CD4-positive, alpha-beta T cell (primary cell): ENCODE measurements at regions of chr13 and their contacts with region 1.

Region 1: DNA sequence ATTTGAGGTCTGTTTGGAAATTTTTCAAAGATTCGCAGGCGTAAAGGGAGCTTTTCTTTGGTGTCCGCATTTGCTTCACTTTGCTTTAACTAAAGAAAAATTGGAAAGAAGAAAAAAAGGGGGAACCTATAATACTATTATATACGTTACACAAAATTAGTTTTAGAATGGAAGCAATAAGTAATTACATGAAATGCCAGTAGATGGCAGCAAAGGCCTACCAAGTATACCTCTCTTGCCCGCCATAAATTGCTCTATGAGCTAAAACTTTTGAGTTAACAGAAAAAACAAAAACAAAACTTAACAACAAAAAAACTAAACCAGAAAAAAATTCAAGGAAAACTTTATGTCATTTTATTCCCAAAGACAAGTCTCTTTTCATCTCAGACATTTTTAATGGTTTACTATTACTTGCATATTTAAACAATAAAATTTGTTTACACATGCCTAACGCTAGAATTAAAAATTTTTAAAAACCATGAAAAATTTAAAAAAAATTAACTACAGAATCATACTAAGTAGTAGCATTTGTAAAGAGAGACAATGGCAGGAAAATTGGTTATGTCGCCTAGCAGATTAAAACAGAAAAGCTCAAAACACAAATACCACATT is 271.4 kb downstream of the NALCN start:
- DNase-seq: peak in 4 of 14 experiments; percentile 30 to 71 (median 60)
- ATAC-seq: peak; percentile 60
- H3K4me3 ChIP-seq: no peak overlapping the region
- H3K4me3 Mint-ChIP-seq: no peak overlapping the region
- H3K27ac ChIP-seq: no peak overlapping the region
- H3K27ac Mint-ChIP-seq: no peak overlapping the region
- H3K4me1 ChIP-seq: no peaks in the 10 kb centered on the region
- H3K4me1 Mint-ChIP-seq: no peaks in the 10 kb centered on the region
- H3K27me3 ChIP-seq: peaks cover 7 to 9% of the 10 kb centered on the region in 2 experiments
- H3K27me3 Mint-ChIP-seq: peaks cover 65% of the 10 kb centered on the region
- CTCF ChIP-seq: peak; percentile 83

Region 2: DNA sequence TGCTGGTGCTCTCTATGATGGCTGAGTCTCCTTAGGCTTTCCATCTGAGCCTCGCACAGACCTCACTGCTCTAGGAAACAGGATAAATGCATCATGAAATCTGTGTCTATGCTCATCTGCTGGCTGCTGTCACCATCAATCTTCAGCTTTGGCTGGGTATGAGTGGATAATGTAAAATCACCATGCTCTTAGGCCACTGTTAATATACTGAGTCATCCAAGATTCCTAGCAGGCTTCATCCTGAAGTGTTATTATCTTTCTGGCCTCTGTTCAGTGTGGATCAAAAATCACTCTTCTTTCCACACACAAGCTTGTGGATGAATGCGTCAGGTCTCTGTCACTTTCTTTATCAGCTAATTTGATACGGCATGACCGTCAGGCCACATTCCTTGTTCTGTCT is 46.0 kb before region 1 on chr13:
- CTCF ChIA-PET with region 1: no interaction called
- POLR2A ChIA-PET with region 1: no interaction called
- intact Hi-C with region 1: no loop called
- DNase-seq: no peak
- ATAC-seq: no peak
- H3K4me3 ChIP-seq: no peak overlapping the region
- H3K4me3 Mint-ChIP-seq: no peak overlapping the region
- H3K27ac ChIP-seq: no peak overlapping the region
- H3K27ac Mint-ChIP-seq: no peak overlapping the region
- H3K4me1 ChIP-seq: no peaks in the 10 kb centered on the region
- H3K4me1 Mint-ChIP-seq: no peaks in the 10 kb centered on the region
- H3K27me3 ChIP-seq: peaks cover 0 to under 1% of the 10 kb centered on the region in 2 experiments
- H3K27me3 Mint-ChIP-seq: peaks cover 24% of the 10 kb centered on the region
- CTCF ChIP-seq: no peak

Region 3: GRCh38 chr13:101155920-101156319 is 11.0 kb after region 1 on chr13:
- CTCF ChIA-PET with region 1: interaction called, 15 read pairs
- POLR2A ChIA-PET with region 1: interaction called, 3 read pairs
- intact Hi-C with region 1: no loop called
- DNase-seq: no peak
- ATAC-seq: no peak
- H3K4me3 ChIP-seq: no peak overlapping the region
- H3K4me3 Mint-ChIP-seq: no peak overlapping the region
- H3K27ac ChIP-seq: no peak overlapping the region
- H3K27ac Mint-ChIP-seq: no peak overlapping the region
- H3K4me1 ChIP-seq: no peaks in the 10 kb centered on the region
- H3K4me1 Mint-ChIP-seq: no peaks in the 10 kb centered on the region
- H3K27me3 ChIP-seq: peaks cover 3 to 22% of the 10 kb centered on the region in 2 experiments
- H3K27me3 Mint-ChIP-seq: peaks cover 48% of the 10 kb centered on the region
- CTCF ChIP-seq: no peak

Region 4: DNA sequence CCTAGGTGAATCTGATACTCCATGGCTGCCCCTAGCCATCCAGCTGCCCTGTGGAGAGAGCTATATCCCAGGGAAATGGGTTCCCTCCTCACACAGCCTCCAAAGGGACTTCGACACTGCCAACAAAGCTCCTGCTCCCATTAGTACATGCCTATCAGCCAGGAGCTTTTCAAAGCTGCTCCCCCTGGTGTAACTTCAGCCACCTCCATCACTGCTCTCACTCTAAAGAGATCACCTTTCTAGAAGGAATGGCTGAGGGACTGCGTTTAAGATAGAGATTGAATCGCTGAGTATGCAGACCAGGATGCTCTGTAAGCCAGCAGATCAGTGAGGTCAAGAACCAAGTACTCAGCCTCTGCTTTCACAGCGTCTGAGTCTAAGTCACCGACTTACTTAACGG is 57.7 kb after region 1 on chr13:
- CTCF ChIA-PET with region 1: no interaction called
- POLR2A ChIA-PET with region 1: no interaction called
- intact Hi-C with region 1: no loop called
- DNase-seq: no peak
- ATAC-seq: no peak
- H3K4me3 ChIP-seq: no peak overlapping the region
- H3K4me3 Mint-ChIP-seq: no peak overlapping the region
- H3K27ac ChIP-seq: no peak overlapping the region
- H3K27ac Mint-ChIP-seq: no peak overlapping the region
- H3K4me1 ChIP-seq: no peaks in the 10 kb centered on the region
- H3K4me1 Mint-ChIP-seq: no peaks in the 10 kb centered on the region
- H3K27me3 ChIP-seq: peaks cover 0 to 2% of the 10 kb centered on the region in 2 experiments
- H3K27me3 Mint-ChIP-seq: peaks cover 8% of the 10 kb centered on the region
- CTCF ChIP-seq: no peak

Region 5: DNA sequence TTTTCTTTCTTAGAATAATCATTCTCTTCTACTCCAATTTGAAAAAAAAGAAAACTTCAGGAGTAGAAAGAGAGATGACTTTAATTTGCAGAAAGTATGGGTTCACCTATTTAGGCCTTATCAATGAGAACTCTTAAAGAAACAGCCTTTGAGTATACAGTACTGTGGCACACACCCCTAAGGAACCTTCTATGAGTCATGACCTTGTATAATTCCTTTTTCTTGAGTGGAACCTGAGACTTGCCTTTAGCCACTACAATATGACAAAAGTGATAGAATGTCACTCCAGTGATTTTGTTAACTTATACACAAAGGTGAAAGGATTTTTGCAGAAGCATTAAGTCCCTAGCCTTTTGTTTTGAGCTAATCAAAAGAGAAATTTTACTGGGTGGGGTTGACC is 366.2 kb after region 1 on chr13:
- CTCF ChIA-PET with region 1: no interaction called
- POLR2A ChIA-PET with region 1: no interaction called
- intact Hi-C with region 1: no loop called
- DNase-seq: no peak
- ATAC-seq: no peak
- H3K4me3 ChIP-seq: no peak overlapping the region
- H3K4me3 Mint-ChIP-seq: no peak overlapping the region
- H3K27ac ChIP-seq: no peak overlapping the region
- H3K27ac Mint-ChIP-seq: no peak overlapping the region
- H3K4me1 ChIP-seq: no peaks in the 10 kb centered on the region
- H3K4me1 Mint-ChIP-seq: no peaks in the 10 kb centered on the region
- H3K27me3 ChIP-seq: no peaks in the 10 kb centered on the region
- H3K27me3 Mint-ChIP-seq: peaks cover 20% of the 10 kb centered on the region
- CTCF ChIP-seq: no peak

Region 6: DNA sequence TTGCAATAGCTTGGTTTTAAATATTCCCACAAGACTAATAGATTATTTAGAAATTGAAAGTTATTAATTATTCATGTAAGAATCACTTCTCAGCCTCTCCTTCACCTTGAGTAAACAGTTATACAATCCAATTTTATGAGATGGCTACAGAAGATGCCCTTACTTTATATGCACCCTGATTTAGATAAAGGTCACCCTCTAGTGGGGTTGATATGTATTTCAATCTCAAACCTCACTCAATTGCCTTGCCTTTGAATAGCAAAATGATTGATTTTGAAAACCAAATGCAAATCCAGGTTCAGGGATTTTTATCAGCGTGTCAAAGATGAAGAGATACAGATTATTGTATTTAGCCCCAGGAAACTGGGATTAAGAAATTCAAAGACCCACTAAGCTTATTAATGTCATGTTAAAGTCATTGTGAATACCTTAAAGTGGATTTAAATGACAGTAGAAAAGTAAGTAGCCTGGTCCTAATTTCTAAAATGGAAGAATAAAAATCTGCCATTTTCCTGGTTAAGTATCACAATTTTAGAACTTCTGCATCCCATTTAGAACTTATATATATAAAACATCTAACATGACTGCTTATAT is 612.6 kb after region 1 on chr13:
- CTCF ChIA-PET with region 1: interaction called, 7 read pairs
- POLR2A ChIA-PET with region 1: no interaction called
- intact Hi-C with region 1: loop called in 1 of 2 experiments (anchors 10 kb)
- DNase-seq: peak in 3 of 14 experiments; percentile 36 to 55 (median 44)
- ATAC-seq: no peak
- H3K4me3 ChIP-seq: no peak overlapping the region
- H3K4me3 Mint-ChIP-seq: no peak overlapping the region
- H3K27ac ChIP-seq: no peak overlapping the region
- H3K27ac Mint-ChIP-seq: no peak overlapping the region
- H3K4me1 ChIP-seq: no peaks in the 10 kb centered on the region
- H3K4me1 Mint-ChIP-seq: no peaks in the 10 kb centered on the region
- H3K27me3 ChIP-seq: no peaks in the 10 kb centered on the region
- H3K27me3 Mint-ChIP-seq: peaks cover 9% of the 10 kb centered on the region
- CTCF ChIP-seq: no peak

Region 7: DNA sequence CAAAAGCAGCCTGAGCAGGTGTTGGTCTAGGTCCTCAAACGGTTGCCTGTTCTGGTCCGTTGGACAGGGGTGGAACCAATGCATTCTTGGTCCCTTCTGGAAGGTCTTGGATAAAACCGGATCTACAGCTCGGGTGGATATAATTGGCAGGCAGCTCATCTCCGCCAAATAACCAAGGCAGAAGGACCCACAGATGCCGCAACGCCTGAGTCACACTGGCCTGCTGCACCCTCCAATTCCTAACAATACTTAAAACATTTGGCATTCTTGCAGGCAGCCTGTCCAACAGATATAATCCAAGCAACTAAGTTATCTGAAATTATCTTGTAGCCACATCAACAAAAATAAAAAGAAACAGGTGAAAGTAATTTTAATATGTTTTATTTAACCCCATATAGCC is 1315.9 kb after region 1 on chr13:
- CTCF ChIA-PET with region 1: interaction called, 8 read pairs
- POLR2A ChIA-PET with region 1: no interaction called
- intact Hi-C with region 1: loop called (anchors 2 kb)
- DNase-seq: no peak
- ATAC-seq: no peak
- H3K4me3 ChIP-seq: no peak overlapping the region
- H3K4me3 Mint-ChIP-seq: no peak overlapping the region
- H3K27ac ChIP-seq: no peak overlapping the region
- H3K27ac Mint-ChIP-seq: no peak overlapping the region
- H3K4me1 ChIP-seq: peaks cover 4% of the 10 kb centered on the region
- H3K4me1 Mint-ChIP-seq: no peaks in the 10 kb centered on the region
- H3K27me3 ChIP-seq: peaks cover 4 to 5% of the 10 kb centered on the region in 2 experiments
- H3K27me3 Mint-ChIP-seq: peaks cover 22% of the 10 kb centered on the region
- CTCF ChIP-seq: no peak

Region 8: GRCh38 chr13:102555917-102556553 is 1411.1 kb after region 1 on chr13:
- CTCF ChIA-PET with region 1: interaction called, 5 read pairs
- POLR2A ChIA-PET with region 1: no interaction called
- intact Hi-C with region 1: loop called (anchors 1 to 2 kb)
- DNase-seq: peak in 4 of 14 experiments; percentile 5 to 51 (median 38)
- ATAC-seq: no peak
- H3K4me3 ChIP-seq: no peak overlapping the region
- H3K4me3 Mint-ChIP-seq: no peak overlapping the region
- H3K27ac ChIP-seq: no peak overlapping the region
- H3K27ac Mint-ChIP-seq: no peak overlapping the region
- H3K4me1 ChIP-seq: no peaks in the 10 kb centered on the region
- H3K4me1 Mint-ChIP-seq: peaks cover 5% of the 10 kb centered on the region
- H3K27me3 ChIP-seq: no peaks in the 10 kb centered on the region
- H3K27me3 Mint-ChIP-seq: peaks cover 6% of the 10 kb centered on the region
- CTCF ChIP-seq: peak; percentile 53